Colonic mucosa (tissue), 4 donors: ENCODE measurements at regions of chr5 and their contacts with region 1.

Region 1: DNA sequence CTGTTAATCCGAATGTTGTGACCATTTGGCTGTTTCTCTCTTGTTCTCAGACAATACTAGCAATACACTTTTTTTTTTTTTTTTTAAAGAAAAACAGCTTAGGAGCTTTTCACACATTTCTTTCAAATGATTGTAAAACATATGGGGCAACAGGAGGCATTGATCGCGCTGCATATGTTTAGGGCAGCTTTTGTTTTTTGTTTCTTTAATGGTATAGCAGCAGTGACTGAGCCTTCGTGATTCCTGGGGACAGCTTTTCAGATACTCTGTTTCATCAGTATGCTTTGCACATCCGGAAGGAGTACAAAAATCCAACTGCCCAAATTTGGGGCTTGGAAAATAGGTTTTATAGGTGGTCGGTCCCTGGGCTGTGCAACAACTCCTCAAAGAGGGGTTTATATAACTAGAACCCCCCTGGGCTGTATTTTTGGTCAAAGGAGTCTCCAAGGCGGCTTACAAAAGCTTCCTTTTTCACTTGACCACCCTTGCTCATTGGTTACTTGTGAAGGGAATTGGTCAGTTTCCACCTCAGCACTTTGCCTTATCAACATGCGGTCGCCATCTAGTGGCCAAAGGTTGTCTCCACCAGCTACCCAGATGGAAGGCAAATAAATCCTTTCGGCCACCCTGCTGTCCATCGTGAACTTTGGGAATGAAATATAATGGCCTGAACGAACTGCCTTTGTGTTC is 91.8 kb downstream of the PDE6A start:
- DNase-seq: peak; percentile 86
- H3K4me3 ChIP-seq: no peak overlapping the region
- H3K27ac ChIP-seq: no peak overlapping the region
- H3K4me1 ChIP-seq: peaks cover 20% of the 10 kb centered on the region
- H3K27me3 ChIP-seq: no peaks in the 10 kb centered on the region
- CTCF ChIP-seq: peak; percentile 77

Region 2: GRCh38 chr5:149960272-149961185 is 107.7 kb after region 1 on chr5 and contains the start of gene SLC26A2:
- intact Hi-C with region 1: loop called (anchors 5 kb)
- DNase-seq: peak; percentile 99
- H3K4me3 ChIP-seq: peak within 1 kb of the TSS; percentile 84
- H3K27ac ChIP-seq: peak within 1 kb of the TSS; percentile 93
- H3K4me1 ChIP-seq: no peaks in the 10 kb centered on the region
- H3K27me3 ChIP-seq: no peaks in the 10 kb centered on the region
- CTCF ChIP-seq: no peak
- total RNA-seq, gene SLC26A2: 339 to 770 TPM